ENCODE measurements at regions of chr1 and their contacts with region 1.

Region 1: GRCh38 chr1:107529502-107530149 is 388.8 kb downstream of the NTNG1 start:
- DNase-seq: peak; percentile 68
- ATAC-seq: peak; percentile 75
- H3K4me3 ChIP-seq: no peak overlapping the region
- H3K27ac ChIP-seq: peak overlapping the region; percentile 49
- H3K4me1 ChIP-seq: peaks cover 26% of the 10 kb centered on the region
- H3K27me3 ChIP-seq: no peaks in the 10 kb centered on the region
- CTCF ChIP-seq: peak; percentile 91

Region 2: GRCh38 chr1:106554294-106554693 is 975.3 kb before region 1 on chr1:
- CTCF ChIA-PET with region 1: no interaction called
- POLR2A ChIA-PET with region 1: no interaction called
- intact Hi-C with region 1: loop called (anchors 5 kb)
- DNase-seq: peak; percentile 43
- ATAC-seq: peak; percentile 49
- H3K4me3 ChIP-seq: no peak overlapping the region
- H3K27ac ChIP-seq: no peak overlapping the region
- H3K4me1 ChIP-seq: peaks cover 7% of the 10 kb centered on the region; the same call in 1 of the 2 replicates
- H3K27me3 ChIP-seq: no peaks in the 10 kb centered on the region
- CTCF ChIP-seq: no peak

Region 3: DNA sequence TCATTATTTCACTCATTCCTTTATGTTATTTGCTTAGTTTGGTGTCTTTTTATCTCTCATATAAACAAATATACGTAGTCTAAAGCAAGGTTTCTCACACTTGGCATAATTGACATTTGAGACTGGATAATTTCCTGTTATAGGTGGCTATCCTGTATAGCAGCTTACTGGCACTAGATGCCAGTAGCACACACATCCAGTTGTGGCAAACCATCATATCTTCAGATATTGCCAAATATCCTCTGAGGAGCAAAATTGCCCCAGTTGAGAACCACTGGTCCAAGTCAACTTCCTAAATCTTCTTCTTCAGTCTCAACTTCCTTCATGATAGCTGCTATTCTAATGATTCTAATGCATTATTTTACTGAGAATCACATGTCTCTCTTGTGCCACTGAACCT is 352.9 kb before region 1 on chr1:
- CTCF ChIA-PET with region 1: interaction called, 3 read pairs
- POLR2A ChIA-PET with region 1: no interaction called
- intact Hi-C with region 1: loop called (anchors 2 kb)
- DNase-seq: no peak
- ATAC-seq: no peak
- H3K4me3 ChIP-seq: no peak overlapping the region
- H3K27ac ChIP-seq: no peak overlapping the region
- H3K4me1 ChIP-seq: 0 out of 2 replicates have a peak, but pooled peaks cover 7% of the 10 kb centered on the region
- H3K27me3 ChIP-seq: no peaks in the 10 kb centered on the region
- CTCF ChIP-seq: peak; percentile 29; the same call in 1 of the 2 replicates

Region 4: DNA sequence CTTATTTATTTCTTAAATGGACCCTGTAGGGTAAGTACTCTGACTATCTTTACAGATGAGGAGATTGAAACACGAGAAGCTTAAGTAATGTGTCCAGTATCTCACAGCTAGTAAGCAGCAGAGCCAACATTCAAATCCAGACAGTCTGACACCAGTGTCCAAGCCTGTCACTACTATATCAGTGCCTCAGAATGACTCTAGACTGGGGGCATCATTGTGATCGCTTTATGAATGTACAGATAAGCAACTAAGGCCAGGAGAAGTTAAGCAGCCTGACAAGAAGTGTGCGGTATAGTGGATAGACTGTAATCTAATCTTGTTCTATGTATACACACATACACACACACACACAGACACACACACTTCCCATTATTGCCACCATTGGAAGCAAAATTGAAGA is 230.1 kb before region 1 on chr1:
- CTCF ChIA-PET with region 1: no interaction called
- POLR2A ChIA-PET with region 1: no interaction called
- intact Hi-C with region 1: no loop called
- DNase-seq: no peak
- ATAC-seq: no peak
- H3K4me3 ChIP-seq: no peak overlapping the region
- H3K27ac ChIP-seq: no peak overlapping the region
- H3K4me1 ChIP-seq: no peaks in the 10 kb centered on the region
- H3K27me3 ChIP-seq: no peaks in the 10 kb centered on the region
- CTCF ChIP-seq: no peak

Region 5: GRCh38 chr1:107389410-107390396 is 139.9 kb before region 1 on chr1:
- CTCF ChIA-PET with region 1: no interaction called
- POLR2A ChIA-PET with region 1: no interaction called
- intact Hi-C with region 1: no loop called
- DNase-seq: no peak
- ATAC-seq: no peak
- H3K4me3 ChIP-seq: no peak overlapping the region
- H3K27ac ChIP-seq: no peak overlapping the region
- H3K4me1 ChIP-seq: no peaks in the 10 kb centered on the region
- H3K27me3 ChIP-seq: no peaks in the 10 kb centered on the region
- CTCF ChIP-seq: no peak

Region 6: GRCh38 chr1:107430540-107431228 is 98.9 kb before region 1 on chr1:
- CTCF ChIA-PET with region 1: interaction called, 5 read pairs
- POLR2A ChIA-PET with region 1: no interaction called
- intact Hi-C with region 1: loop called (anchors 1 kb)
- DNase-seq: peak; percentile 75
- ATAC-seq: peak; percentile 73
- H3K4me3 ChIP-seq: no peak overlapping the region
- H3K27ac ChIP-seq: no peak overlapping the region
- H3K4me1 ChIP-seq: no peaks in the 10 kb centered on the region
- H3K27me3 ChIP-seq: no peaks in the 10 kb centered on the region
- CTCF ChIP-seq: peak; percentile 95

Region 7: GRCh38 chr1:107590900-107591633 is 61.4 kb after region 1 on chr1:
- CTCF ChIA-PET with region 1: no interaction called
- POLR2A ChIA-PET with region 1: interaction called, 4 read pairs
- intact Hi-C with region 1: loop called (anchors 2 kb)
- DNase-seq: no peak
- ATAC-seq: no peak
- H3K4me3 ChIP-seq: no peak overlapping the region
- H3K27ac ChIP-seq: no peak overlapping the region
- H3K4me1 ChIP-seq: peaks cover 34% of the 10 kb centered on the region
- H3K27me3 ChIP-seq: no peaks in the 10 kb centered on the region
- CTCF ChIP-seq: no peak

Region 8: GRCh38 chr1:107626073-107626833 is 96.6 kb after region 1 on chr1:
- CTCF ChIA-PET with region 1: no interaction called
- POLR2A ChIA-PET with region 1: no interaction called
- intact Hi-C with region 1: no loop called
- DNase-seq: no peak
- ATAC-seq: no peak
- H3K4me3 ChIP-seq: no peak overlapping the region
- H3K27ac ChIP-seq: no peak overlapping the region
- H3K4me1 ChIP-seq: no peaks in the 10 kb centered on the region
- H3K27me3 ChIP-seq: no peaks in the 10 kb centered on the region
- CTCF ChIP-seq: no peak

Region 9: DNA sequence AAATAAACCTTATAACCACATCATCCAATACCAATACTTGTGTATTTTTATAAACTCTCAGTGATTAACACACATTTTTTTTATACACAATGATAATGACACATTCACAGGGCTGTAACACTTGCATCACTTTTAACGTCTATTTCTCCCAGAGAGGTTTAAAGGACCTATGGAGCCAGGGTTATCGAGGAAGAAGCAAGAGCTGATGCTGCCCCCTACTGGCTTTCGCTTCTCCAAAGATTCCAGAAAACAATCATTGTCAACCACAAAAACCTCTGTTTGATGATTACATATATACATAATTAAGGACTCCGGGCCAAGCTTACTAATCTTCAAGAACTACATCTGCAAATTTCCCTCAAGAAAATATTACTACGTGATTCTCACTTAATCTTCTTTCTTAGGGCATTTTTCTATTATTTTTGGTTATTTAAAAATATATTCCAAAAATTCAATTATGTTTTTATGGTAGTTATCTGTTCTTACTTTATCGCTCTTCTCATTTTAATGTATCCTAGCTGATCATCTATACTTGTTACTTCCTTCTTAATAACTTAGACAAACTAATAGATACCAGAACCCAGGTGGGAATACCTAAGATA is 220.8 kb after region 1 on chr1:
- CTCF ChIA-PET with region 1: interaction called, 6 read pairs
- POLR2A ChIA-PET with region 1: no interaction called
- intact Hi-C with region 1: loop called (anchors 1 kb)
- DNase-seq: peak; percentile 85
- ATAC-seq: peak; percentile 68
- H3K4me3 ChIP-seq: no peak overlapping the region
- H3K27ac ChIP-seq: no peak overlapping the region
- H3K4me1 ChIP-seq: no peaks in the 10 kb centered on the region
- H3K27me3 ChIP-seq: no peaks in the 10 kb centered on the region
- CTCF ChIP-seq: peak; percentile 90

Measured in PC-3 (cell line).